Sigmoid colon (tissue), 7 donors: ENCODE measurements at regions of chr12 and their contacts with region 1.

Region 1: DNA sequence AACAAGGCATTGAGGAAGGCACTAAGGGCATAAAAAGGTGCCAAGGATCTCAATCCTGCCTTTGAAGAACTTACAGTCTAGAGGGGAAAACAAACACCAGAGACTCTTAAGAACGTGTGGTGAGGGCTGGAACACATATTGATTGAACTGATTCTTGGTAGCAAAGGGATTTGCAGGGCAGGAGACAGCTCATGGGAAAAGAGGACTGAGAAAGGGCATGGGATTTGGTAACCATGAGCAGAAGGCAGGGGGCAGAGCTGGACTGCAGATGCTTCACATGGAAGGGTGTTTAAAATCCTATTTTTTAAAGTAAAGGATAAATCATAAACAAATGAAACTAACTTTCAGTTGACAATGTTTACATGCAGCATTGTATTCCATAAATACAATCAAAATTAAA is 203.1 kb downstream of the ITPR2 start:
- DNase-seq: no peak
- H3K4me3 ChIP-seq: peak overlapping the region in 1 of 4 donors; percentile 31
- H3K27ac ChIP-seq: peak overlapping the region; percentile 69 to 83 (median 74)
- H3K4me1 ChIP-seq: peaks cover 0 to 52% (median 39%) of the 10 kb centered on the region in 4 donors
- H3K27me3 ChIP-seq: no peaks in the 10 kb centered on the region
- CTCF ChIP-seq: peak; percentile 32 to 61 (median 45)
- EP300 ChIP-seq: no peak
- POLR2A ChIP-seq: no peak

Region 2: DNA sequence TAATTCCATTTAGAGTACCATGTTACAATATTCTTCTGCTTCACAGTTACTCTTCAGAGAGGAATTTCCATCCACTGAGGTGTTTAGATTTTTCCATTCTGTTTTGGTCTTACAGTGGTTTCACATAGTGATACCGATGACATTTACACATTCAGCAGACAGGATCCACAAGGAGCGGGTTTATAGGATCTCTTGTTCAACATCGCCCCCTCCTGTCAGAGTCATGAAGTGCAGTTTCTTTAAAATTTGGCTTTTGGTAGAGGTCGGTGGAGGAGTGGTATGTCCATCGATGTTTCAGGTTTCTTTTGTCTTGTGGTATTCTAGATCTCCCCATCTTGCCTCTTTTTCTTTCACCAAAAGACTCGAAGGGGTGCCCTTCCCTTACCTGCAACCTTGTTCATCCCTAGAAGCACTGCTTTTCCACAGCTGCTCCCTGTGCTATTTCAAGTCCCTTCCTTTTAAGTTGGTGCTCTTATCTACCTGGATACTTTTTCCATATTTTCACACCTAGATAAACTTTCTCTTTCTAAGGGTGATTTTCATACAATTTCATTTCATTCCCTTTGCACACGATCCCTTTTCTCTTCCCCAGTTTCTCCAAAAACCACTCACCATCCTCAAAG is 21.8 kb after region 1 on chr12:
- intact Hi-C with region 1: loop called (anchors 1 kb)
- DNase-seq: no peak
- H3K4me3 ChIP-seq: no peak overlapping the region
- H3K27ac ChIP-seq: peak overlapping the region in 2 of 4 donors; percentile 25 to 39
- H3K4me1 ChIP-seq: peaks cover 0 to 25% (median 13%) of the 10 kb centered on the region in 4 donors
- H3K27me3 ChIP-seq: no peaks in the 10 kb centered on the region
- CTCF ChIP-seq: peak; percentile 69 to 82 (median 77)
- EP300 ChIP-seq: no peak
- POLR2A ChIP-seq: no peak

Region 3: DNA sequence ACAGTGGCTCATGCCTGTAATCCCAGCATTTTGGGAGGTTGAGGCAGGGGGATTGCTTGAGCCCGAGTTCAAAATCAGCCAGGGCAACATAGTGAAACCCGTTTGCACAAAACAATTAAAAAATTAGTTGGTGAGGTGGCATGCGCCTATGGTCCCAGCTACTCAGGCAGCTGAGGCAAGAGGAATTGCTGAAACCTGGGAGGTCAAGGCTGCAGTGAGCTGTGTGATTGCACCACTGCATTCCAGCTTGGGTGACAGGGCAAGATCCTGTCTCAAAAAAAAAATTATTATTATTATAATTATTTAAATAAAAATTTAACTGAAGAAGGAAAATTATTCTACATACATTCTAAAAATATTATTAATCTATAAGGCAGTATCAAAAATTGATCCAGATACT is 39.0 kb after region 1 on chr12:
- intact Hi-C with region 1: no loop called
- DNase-seq: no peak
- H3K4me3 ChIP-seq: no peak overlapping the region
- H3K27ac ChIP-seq: no peak overlapping the region
- H3K4me1 ChIP-seq: no peaks in the 10 kb centered on the region
- H3K27me3 ChIP-seq: no peaks in the 10 kb centered on the region
- CTCF ChIP-seq: no peak
- EP300 ChIP-seq: no peak
- POLR2A ChIP-seq: no peak

Region 4: DNA sequence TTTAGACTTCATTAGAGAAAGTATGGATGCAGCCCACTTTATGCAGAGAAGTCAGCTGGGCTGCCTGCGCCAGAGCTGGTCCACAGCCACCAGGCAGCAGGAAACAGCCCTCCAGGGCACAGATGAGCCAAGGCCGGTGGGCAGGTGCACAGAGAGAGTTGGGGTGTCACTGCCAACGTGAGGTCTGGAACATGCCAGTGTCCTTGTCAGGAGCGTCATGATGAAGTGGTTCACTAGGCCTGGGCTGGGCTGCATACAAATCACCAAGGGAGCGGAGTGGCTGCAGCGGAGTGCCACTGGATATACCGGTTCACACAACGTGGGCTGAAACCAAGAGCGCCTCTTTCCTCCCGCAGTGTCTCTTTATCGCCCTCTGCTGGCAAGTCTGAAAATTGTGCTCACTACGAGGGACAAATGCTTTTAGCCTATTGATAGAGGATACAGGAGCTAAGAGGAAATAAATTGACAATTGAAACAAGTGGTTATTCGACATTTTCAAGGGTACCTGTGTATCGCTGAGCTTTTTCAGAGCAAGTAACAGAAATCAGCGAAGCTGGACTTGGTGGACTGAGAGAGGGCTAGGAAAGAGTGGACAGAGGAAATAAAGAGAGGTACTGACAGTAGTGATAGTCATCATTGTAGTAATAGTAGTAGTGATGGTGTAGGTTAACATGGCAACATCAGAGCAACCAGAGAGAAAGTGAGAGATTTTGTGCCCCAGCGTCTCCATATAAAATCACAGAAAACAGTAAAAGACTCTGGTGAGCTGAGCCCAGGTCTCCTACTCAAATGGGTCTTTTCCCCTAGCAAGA is 255.1 kb after region 1 on chr12:
- intact Hi-C with region 1: loop called (anchors 5 kb)
- DNase-seq: peak; percentile 90
- H3K4me3 ChIP-seq: no peak overlapping the region
- H3K27ac ChIP-seq: no peak overlapping the region
- H3K4me1 ChIP-seq: peaks cover 0 to 6% (median 3%) of the 10 kb centered on the region in 4 donors
- H3K27me3 ChIP-seq: no peaks in the 10 kb centered on the region
- CTCF ChIP-seq: peak; percentile 90 to 96 (median 94)
- EP300 ChIP-seq: no peak
- POLR2A ChIP-seq: no peak